ENCODE measurements at regions of chr11 and their contacts with region 1.

Region 1: GRCh38 chr11:60363542-60364510 is 14.5 kb upstream of the MS4A7 start:
- DNase-seq: peak; percentile 74
- ATAC-seq: peak; percentile 69
- H3K4me3 Mint-ChIP-seq: no peak overlapping the region
- H3K27ac Mint-ChIP-seq: no peak overlapping the region
- H3K4me1 Mint-ChIP-seq: peaks cover 7% of the 10 kb centered on the region
- H3K27me3 Mint-ChIP-seq: peaks cover 27% of the 10 kb centered on the region
- CTCF ChIP-seq: peak; percentile 76

Region 2: DNA sequence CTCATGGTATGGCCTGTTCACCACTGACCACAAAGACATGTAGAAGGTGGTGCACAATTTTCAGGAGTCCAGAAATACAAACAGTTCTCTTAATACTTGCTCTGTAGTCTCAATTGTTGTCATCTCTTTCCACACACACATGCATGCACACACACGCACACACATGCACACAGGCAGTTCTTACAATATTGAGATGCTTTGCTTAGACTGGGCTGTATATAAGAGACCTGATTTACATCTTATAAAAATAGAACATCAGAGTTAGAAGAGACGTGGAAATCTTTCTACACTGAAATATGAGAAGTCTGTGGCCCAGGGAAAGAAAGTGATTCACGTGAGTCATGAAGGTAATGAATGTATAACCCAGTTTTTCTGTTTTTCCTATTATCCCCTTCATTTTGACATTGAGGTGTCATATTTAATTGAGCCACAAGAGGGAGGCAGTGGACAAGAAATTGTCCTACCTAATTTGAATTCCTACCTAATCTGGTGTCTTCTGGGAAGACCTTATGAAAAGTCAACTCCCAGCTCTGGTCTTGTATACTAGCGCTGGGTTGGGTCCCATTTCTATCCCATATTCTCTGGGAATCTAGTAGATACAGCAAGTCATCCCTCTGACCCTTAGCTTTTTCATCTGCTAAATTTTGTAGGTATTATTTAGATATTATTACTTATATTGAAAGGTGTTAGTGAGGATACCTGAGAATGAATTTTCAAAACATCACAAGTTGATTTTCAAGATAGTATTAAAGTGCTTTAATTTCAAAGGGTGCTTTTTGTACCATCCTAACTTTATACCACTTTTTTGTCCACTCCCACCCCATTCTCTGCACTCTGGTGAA is 98.2 kb before region 1 on chr11:
- CTCF ChIA-PET with region 1: interaction called, 10 read pairs
- POLR2A ChIA-PET with region 1: no interaction called
- intact Hi-C with region 1: no loop called
- DNase-seq: peak; percentile 25
- ATAC-seq: no peak
- H3K4me3 Mint-ChIP-seq: no peak overlapping the region
- H3K27ac Mint-ChIP-seq: no peak overlapping the region
- H3K4me1 Mint-ChIP-seq: no peaks in the 10 kb centered on the region
- H3K27me3 Mint-ChIP-seq: peaks cover 14% of the 10 kb centered on the region
- CTCF ChIP-seq: peak; percentile 88

Region 3: GRCh38 chr11:60345489-60345888 is 18.3 kb before region 1 on chr11:
- CTCF ChIA-PET with region 1: interaction called, 77 read pairs
- POLR2A ChIA-PET with region 1: no interaction called
- intact Hi-C with region 1: no loop called
- DNase-seq: peak; percentile 52
- ATAC-seq: no peak
- H3K4me3 Mint-ChIP-seq: no peak overlapping the region
- H3K27ac Mint-ChIP-seq: no peak overlapping the region
- H3K4me1 Mint-ChIP-seq: no peaks in the 10 kb centered on the region
- H3K27me3 Mint-ChIP-seq: peaks cover 17% of the 10 kb centered on the region
- CTCF ChIP-seq: peak; percentile 41

Region 4: DNA sequence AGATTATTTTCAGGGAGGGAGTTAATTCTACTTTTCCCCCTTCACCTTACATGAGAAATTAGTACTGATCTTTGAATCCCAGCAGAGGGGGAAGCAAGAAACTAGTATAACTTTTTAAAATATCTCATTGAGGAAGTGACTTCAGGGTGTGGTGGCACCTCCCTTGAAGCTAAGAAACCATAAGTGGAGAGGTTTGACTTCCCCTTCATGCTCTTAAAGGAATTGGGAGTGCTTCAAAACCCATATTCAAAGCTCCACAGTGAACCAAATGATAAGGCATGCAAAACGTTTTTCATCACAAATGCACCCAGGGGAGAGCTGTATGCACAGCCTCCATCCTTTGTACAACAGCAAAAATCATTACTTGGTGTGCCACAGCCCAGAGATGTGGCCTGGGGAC is 33.0 kb after region 1 on chr11:
- CTCF ChIA-PET with region 1: interaction called, 10 read pairs
- POLR2A ChIA-PET with region 1: no interaction called
- intact Hi-C with region 1: no loop called
- DNase-seq: no peak
- ATAC-seq: no peak
- H3K4me3 Mint-ChIP-seq: no peak overlapping the region
- H3K27ac Mint-ChIP-seq: no peak overlapping the region
- H3K4me1 Mint-ChIP-seq: no peaks in the 10 kb centered on the region
- H3K27me3 Mint-ChIP-seq: peaks cover 7% of the 10 kb centered on the region
- CTCF ChIP-seq: no peak

Region 5: GRCh38 chr11:60485986-60486385 is 122.2 kb after region 1 on chr11:
- CTCF ChIA-PET with region 1: interaction called, 22 read pairs
- POLR2A ChIA-PET with region 1: no interaction called
- intact Hi-C with region 1: loop called (anchors 5 kb)
- DNase-seq: peak; percentile 42
- ATAC-seq: peak; percentile 56
- H3K4me3 Mint-ChIP-seq: no peak overlapping the region
- H3K27ac Mint-ChIP-seq: no peak overlapping the region
- H3K4me1 Mint-ChIP-seq: no peaks in the 10 kb centered on the region
- H3K27me3 Mint-ChIP-seq: peaks cover 6% of the 10 kb centered on the region
- CTCF ChIP-seq: peak; percentile 20

Region 6: DNA sequence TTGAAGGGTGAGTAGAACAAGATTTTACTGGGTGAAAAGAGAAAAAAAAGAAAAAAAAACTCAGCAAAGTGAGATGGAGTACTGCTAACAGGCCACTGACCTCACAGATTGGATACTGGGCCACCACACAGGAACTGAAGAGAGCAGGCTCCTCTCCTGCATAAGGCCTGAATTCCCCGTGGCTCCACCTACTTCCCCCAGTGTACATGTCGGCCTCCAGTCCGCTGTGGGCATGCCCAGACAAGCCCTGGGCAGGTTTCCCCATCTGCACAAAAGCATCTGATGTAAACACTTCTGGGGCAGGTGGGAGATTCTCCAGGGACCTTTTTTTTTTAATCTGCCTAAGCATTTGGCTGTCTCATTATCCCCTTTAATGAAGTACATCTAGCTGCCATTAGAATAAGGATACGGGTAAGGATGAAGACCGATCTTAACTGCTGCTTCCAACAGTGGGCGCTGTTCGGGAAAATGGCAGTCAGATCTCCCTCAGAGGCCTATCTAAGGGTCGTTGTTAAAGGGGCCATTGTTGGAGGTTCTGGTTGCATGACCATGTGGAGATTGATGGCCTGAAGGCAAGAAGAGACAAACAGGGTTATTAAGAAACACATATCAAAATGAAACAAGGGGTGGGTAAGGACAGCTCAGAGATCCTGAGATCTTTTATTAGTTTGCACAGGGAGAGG is 199.9 kb after region 1 on chr11:
- CTCF ChIA-PET with region 1: no interaction called
- POLR2A ChIA-PET with region 1: no interaction called
- intact Hi-C with region 1: no loop called
- DNase-seq: peak; percentile 26
- ATAC-seq: peak; percentile 34
- H3K4me3 Mint-ChIP-seq: no peak overlapping the region
- H3K27ac Mint-ChIP-seq: peak overlapping the region; percentile 26
- H3K4me1 Mint-ChIP-seq: no peaks in the 10 kb centered on the region
- H3K27me3 Mint-ChIP-seq: peaks cover 6% of the 10 kb centered on the region
- CTCF ChIP-seq: no peak

Region 7: DNA sequence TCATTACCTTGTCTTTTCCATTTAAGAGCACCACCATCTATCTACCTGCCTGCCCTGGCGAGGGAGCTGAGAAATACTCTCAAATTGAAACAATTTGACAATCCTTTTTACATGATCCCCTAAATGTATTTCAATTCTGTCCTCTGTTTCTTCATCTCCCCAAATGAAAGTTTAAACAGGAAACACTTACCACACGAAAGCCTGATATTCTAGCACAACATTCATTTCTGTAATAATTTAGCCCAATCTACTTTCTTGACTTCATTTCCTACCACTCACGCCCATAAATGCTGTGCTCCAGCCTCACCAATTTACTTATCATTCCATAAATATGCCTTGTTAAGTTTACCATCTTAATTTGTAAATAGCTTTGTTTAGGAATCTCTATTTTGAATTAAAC is 245.8 kb after region 1 on chr11:
- CTCF ChIA-PET with region 1: interaction called, 14 read pairs
- POLR2A ChIA-PET with region 1: no interaction called
- intact Hi-C with region 1: no loop called
- DNase-seq: no peak
- ATAC-seq: no peak
- H3K4me3 Mint-ChIP-seq: no peak overlapping the region
- H3K27ac Mint-ChIP-seq: no peak overlapping the region
- H3K4me1 Mint-ChIP-seq: peaks cover 10% of the 10 kb centered on the region
- H3K27me3 Mint-ChIP-seq: peaks cover 13% of the 10 kb centered on the region
- CTCF ChIP-seq: no peak

Region 8: DNA sequence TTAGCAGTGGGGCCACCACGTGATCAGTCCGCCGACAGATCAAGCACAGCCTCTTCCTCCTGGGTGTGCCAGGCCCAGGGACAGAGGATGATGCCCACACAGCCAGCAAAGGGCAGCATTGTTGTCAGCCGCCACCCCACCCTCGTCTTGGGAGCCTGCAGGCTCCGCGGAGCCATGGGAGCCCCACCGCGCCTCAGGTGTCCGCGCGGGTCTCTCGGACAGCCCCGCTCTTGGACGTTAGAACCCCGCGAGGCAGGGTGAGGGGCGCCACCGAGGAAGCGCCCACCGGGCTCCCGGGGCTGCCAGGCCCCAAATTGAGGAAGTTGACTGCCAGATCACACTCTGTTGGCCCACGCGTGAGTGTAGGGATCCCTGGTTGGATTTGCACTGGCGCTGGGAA is 251.7 kb after region 1 on chr11:
- CTCF ChIA-PET with region 1: interaction called, 36 read pairs
- POLR2A ChIA-PET with region 1: no interaction called
- intact Hi-C with region 1: loop called (anchors 2 kb)
- DNase-seq: no peak
- ATAC-seq: no peak
- H3K4me3 Mint-ChIP-seq: no peak overlapping the region
- H3K27ac Mint-ChIP-seq: no peak overlapping the region
- H3K4me1 Mint-ChIP-seq: no peaks in the 10 kb centered on the region
- H3K27me3 Mint-ChIP-seq: peaks cover 10% of the 10 kb centered on the region
- CTCF ChIP-seq: no peak

Measured in activated CD8-positive, alpha-beta T cell treated with anti-CD3 and anti-CD28 coated beads for 36 hours (primary cell).